AG04449 (cell line): ENCODE measurements at regions of chr9 and their contacts with region 1.

Region 1: DNA sequence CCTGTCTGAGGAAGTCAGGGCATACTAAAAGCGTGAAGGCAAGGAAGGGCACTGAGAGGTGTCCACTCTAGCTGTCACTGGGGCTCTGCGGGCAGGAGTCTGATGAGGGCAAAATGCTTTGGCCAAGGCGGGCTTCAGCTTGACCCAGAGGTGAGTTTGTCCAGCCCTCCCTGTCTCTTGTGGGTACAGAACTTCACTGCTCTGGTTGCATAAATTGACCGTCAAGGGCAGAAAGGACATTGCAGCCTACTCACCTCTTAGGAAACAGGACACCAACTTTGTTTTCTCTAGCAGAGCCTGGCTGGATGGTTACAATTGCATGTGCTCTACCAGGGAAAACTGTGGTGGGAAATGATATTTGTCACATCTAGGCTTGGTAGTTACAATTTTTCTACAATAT is 170.9 kb downstream of the TMEM38B start:
- DNase-seq: no peak
- H3K4me3 ChIP-seq: no peak overlapping the region
- CTCF ChIP-seq: no peak

Region 2: GRCh38 chr9:105881654-105882349 is 16.5 kb after region 1 on chr9:
- CTCF ChIA-PET with region 1: interaction called, 11 read pairs
- POLR2A ChIA-PET with region 1: no interaction called
- DNase-seq: no peak
- H3K4me3 ChIP-seq: no peak overlapping the region
- CTCF ChIP-seq: peak; percentile 78

Region 3: GRCh38 chr9:106052166-106052565 is 186.9 kb after region 1 on chr9:
- CTCF ChIA-PET with region 1: no interaction called
- POLR2A ChIA-PET with region 1: no interaction called
- DNase-seq: no peak
- H3K4me3 ChIP-seq: no peak overlapping the region
- CTCF ChIP-seq: no peak